ENCODE measurements at regions of chr3 and their contacts with region 1.

Region 1: GRCh38 chr3:136752422-136753325 is 496 bp upstream of the STAG1 start:
- DNase-seq: peak; percentile 99
- H3K4me3 Mint-ChIP-seq: peak overlapping the region; percentile 83
- H3K27ac Mint-ChIP-seq: peak overlapping the region; percentile 93
- H3K4me1 Mint-ChIP-seq: peaks cover 40% of the 10 kb centered on the region
- H3K27me3 Mint-ChIP-seq: no peaks in the 10 kb centered on the region

Region 2: DNA sequence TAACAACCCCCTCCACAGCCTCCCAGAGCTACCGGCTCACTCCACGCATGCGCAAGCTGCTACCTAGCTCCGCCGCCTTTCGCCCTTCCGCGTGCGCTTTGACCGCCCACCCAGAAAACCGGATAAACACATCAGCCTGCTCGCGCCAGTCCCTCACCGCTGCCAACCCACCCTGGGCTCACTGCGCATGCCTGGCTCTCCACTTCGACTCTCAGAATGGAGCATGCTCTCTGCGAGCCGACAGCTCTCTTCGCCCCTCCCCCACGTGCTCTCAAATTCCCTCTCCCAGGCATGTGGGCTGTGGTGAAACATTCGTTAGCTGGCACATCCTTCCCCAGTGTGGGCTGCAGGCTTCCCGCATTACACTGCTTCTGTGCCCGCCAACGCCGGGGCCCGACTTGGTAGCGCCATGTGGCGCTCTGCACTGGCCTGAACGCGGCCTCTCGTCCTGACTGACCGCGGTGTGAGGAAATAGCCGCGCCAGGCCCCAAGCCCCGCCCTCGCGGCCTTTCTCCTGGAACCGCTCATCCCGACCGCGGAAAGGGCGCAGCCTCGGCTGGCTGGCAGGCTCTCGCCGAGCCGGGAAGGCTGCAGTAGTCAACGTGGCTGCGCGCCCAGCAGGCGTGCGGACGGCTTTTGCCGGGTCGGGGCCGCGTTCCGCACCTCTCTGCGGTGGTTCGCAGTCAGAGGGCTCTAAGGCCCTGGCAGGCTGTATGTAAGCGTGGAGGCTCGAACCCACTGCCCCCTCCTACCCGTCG is 556.1 kb before region 1 on chr3:
- CTCF ChIA-PET with region 1: interaction called, 61 read pairs
- POLR2A ChIA-PET with region 1: interaction called, 92 read pairs
- DNase-seq: peak; percentile 99
- H3K4me3 Mint-ChIP-seq: peak overlapping the region; percentile 98
- H3K27ac Mint-ChIP-seq: peak overlapping the region; percentile 97
- H3K4me1 Mint-ChIP-seq: peaks cover 32% of the 10 kb centered on the region
- H3K27me3 Mint-ChIP-seq: peaks cover 2% of the 10 kb centered on the region

Region 3: GRCh38 chr3:136351905-136352304 is 400.8 kb before region 1 on chr3:
- CTCF ChIA-PET with region 1: interaction called, 11 read pairs
- POLR2A ChIA-PET with region 1: interaction called, 5 read pairs
- DNase-seq: no peak
- H3K4me3 Mint-ChIP-seq: no peak overlapping the region
- H3K27ac Mint-ChIP-seq: no peak overlapping the region
- H3K4me1 Mint-ChIP-seq: peaks cover 12% of the 10 kb centered on the region
- H3K27me3 Mint-ChIP-seq: no peaks in the 10 kb centered on the region

Region 4: GRCh38 chr3:136390574-136390973 is 362.1 kb before region 1 on chr3:
- CTCF ChIA-PET with region 1: interaction called, 93 read pairs
- POLR2A ChIA-PET with region 1: interaction called, 16 read pairs
- DNase-seq: no peak
- H3K4me3 Mint-ChIP-seq: no peak overlapping the region
- H3K27ac Mint-ChIP-seq: no peak overlapping the region
- H3K4me1 Mint-ChIP-seq: peaks cover 2% of the 10 kb centered on the region
- H3K27me3 Mint-ChIP-seq: no peaks in the 10 kb centered on the region

Region 5: GRCh38 chr3:136644212-136644611 is 108.5 kb before region 1 on chr3:
- CTCF ChIA-PET with region 1: no interaction called
- POLR2A ChIA-PET with region 1: no interaction called
- DNase-seq: no peak
- H3K4me3 Mint-ChIP-seq: no peak overlapping the region
- H3K27ac Mint-ChIP-seq: no peak overlapping the region
- H3K4me1 Mint-ChIP-seq: peaks cover 6% of the 10 kb centered on the region
- H3K27me3 Mint-ChIP-seq: no peaks in the 10 kb centered on the region

Region 6: DNA sequence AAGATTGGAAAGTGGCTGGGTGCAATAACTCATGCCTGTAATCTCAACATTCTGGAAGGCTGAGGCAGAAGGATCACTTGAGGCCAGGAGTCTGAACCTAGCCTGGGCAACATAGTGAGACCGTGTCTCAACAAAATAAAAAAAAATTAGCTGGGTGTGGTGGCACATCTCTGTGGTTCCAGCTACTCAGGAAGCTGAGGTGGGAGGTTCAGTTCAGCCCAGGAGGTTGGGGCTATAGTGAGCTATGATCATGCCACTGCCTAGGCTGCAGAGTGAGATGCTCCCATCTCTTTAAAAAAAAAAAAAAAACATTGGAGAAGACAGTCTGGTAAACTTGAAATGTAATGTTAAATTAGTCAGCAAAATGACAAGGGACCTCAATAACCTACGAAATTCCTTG is 58.4 kb before region 1 on chr3:
- CTCF ChIA-PET with region 1: interaction called, 23 read pairs
- POLR2A ChIA-PET with region 1: interaction called, 7 read pairs
- DNase-seq: peak; percentile 47
- H3K4me3 Mint-ChIP-seq: peak overlapping the region; percentile 7
- H3K27ac Mint-ChIP-seq: peak overlapping the region; percentile 70
- H3K4me1 Mint-ChIP-seq: peaks cover 47% of the 10 kb centered on the region
- H3K27me3 Mint-ChIP-seq: no peaks in the 10 kb centered on the region

Region 7: GRCh38 chr3:136838641-136839555 is 86.2 kb after region 1 on chr3:
- CTCF ChIA-PET with region 1: interaction called, 7 read pairs
- POLR2A ChIA-PET with region 1: interaction called, 12 read pairs
- DNase-seq: no peak
- H3K4me3 Mint-ChIP-seq: no peak overlapping the region
- H3K27ac Mint-ChIP-seq: peak overlapping the region; percentile 67
- H3K4me1 Mint-ChIP-seq: peaks cover 34% of the 10 kb centered on the region
- H3K27me3 Mint-ChIP-seq: no peaks in the 10 kb centered on the region

Region 8: GRCh38 chr3:137013955-137014688 is 261.4 kb after region 1 on chr3:
- CTCF ChIA-PET with region 1: interaction called, 199 read pairs
- POLR2A ChIA-PET with region 1: interaction called, 49 read pairs
- DNase-seq: peak; percentile 83
- H3K4me3 Mint-ChIP-seq: peak overlapping the region; percentile 61
- H3K27ac Mint-ChIP-seq: no peak overlapping the region
- H3K4me1 Mint-ChIP-seq: peaks cover 14% of the 10 kb centered on the region
- H3K27me3 Mint-ChIP-seq: peaks cover 2% of the 10 kb centered on the region

Measured in activated CD4-positive, alpha-beta memory T cell treated with anti-CD3 and anti-CD28 coated beads, Interleukin-2, amount 10 ng/mL, durations not matched to agents 7 days and 5 days (primary cell).